Sciatic nerve (tissue), 2 donors: ENCODE measurements at regions of chr9 and their contacts with region 1.

Region 1: DNA sequence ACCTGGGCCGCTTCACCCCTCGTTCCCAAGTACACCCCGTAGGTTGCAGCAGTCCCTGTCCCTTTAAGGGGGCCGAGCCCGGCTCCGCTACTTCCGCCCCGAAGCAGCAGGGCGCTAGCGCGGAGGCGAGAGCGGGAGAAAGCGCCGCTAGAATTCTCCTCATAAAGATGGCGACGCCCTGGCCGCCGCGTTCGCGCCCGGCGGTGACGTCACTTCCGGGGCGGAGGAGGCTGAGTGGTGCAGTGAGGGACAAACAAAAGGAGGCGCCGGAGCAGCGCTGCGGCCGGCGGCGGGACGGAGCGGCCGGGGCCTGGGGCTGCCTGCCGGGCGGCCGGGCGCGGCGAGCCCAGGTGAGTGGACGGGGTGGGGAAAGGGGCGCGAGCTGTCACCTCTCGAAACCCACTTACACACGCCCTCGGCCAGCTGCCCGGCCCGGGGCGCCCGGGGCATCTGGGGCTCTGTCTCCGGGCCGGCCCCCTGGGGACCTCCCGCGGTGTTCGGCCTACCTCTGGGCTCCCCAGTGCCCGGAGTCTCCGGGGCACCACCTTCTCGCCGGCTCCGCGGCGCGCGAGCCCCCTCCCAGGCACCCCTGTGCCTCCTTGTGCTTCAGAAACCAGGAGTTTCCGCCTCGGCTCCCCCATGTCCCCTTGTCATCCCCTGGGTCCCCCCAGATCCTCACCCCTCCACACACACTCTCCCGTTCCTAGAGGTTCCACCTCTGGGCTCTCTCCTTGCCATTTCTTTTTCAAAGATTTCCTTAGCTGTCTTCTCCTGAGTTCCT is at the starts of genes KYAT1 and LRRC8A:
- DNase-seq: peak; percentile 99
- ATAC-seq: peak; percentile 95
- total RNA-seq, gene KYAT1: 12.8 TPM
- total RNA-seq, gene LRRC8A: 67.2 TPM

Region 2: DNA sequence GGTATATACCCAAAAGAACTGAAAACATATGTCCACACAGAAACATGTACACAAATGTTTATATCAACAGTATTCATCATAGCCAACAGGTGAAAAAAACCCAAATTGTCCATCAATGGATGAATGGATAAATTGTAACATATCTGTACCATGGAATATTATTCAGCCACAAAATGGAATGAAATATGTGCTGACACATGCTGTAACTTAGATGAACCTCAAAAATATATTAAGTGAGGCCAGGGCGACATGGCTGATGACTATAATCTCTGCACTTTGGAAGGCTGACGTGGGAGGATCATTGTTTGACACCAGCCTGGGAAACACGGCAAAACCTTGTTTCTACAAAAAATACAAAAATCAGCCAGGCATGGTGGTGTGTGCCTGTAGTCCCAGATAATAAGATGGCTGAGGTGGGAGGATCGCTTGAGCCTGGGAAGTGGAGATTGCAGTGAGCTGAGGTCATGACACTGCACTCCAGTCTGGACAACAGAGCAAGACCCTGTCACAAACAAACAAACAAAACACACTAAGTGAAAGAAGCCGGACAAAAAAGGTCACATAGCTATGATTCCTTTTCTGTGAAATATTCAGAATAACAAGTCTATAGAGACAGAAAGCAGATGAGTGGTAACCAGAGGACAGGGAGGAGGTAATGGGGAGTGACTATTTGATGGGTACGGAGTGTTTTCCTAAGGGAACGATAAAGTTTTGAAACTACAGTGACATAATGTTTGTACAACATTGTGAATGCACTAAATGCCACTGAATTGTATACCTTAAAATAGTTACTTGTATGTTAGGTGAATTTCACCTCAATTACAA is 11.8 kb before region 1 on chr9:
- intact Hi-C with region 1: no loop called
- DNase-seq: no peak
- ATAC-seq: no peak

Region 3: DNA sequence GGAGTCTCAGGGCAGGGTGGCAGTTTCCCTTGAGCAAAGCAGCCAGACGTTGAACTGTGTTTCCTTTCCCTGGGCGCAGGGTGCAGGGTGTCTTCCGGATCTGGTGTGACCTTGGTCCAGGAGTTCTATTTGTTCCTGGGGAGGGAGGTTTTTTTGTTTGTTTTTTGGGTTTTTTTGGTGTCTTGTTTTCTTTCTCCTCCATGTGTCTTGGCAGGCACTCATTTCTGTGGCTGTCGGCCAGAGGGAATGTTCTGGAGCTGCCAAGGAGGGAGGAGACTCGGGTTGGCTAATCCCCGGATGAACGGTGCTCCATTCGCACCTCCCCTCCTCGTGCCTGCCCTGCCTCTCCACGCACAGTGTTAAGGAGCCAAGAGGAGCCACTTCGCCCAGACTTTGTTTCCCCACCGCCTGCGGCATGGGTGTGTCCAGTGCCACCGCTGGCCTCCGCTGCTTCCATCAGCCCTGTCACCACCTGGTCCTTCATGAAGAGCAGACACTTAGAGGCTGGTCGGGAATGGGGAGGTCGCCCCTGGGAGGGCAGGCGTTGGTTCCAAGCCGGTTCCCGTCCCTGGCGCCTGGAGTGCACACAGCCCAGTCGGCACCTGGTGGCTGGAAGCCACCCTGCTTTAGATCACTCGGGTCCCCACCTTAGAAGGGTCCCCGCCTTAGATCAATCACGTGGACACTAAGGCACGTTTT is 35.2 kb after region 1 on chr9:
- intact Hi-C with region 1: loop called (anchors 5 kb)
- DNase-seq: peak; percentile 89
- ATAC-seq: peak; percentile 80

Region 4: GRCh38 chr9:129093421-129094204 is 211.5 kb after region 1 on chr9:
- intact Hi-C with region 1: no loop called
- DNase-seq: no peak
- ATAC-seq: no peak